ENCODE measurements at regions of chr10 and their contacts with region 1.

Region 1: DNA sequence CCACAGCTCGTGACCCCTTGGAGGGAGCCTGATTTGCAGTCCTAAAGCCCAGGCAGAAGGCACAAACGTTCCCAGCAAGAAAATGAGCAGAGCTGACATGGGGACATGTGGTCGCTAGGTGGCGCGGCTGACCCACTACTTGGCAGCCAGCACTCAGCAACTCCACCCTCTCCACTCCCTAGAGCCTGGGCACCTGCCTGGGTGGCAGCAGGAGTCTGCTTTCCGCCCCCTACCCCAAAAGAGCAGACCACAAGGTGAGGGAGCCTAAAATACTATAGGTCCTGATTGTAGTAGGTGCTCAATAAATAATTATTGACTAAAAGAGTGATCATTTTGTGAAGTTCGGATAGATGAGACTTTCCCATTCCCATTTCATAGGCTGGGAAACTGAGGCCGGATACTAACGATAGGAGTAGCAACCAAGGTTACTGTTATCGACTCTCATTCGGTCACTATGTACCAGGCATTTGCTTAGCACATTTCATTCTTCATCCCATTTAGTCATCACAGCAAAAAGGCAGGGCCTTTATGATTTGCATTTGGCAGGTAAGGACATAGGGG is 57.4 kb downstream of the NEUROG3 start:
- DNase-seq: peak; percentile 85
- ATAC-seq: peak; percentile 94
- H3K4me3 Mint-ChIP-seq: no peak overlapping the region
- H3K27ac Mint-ChIP-seq: no peak overlapping the region
- H3K4me1 Mint-ChIP-seq: no peaks in the 10 kb centered on the region
- H3K27me3 Mint-ChIP-seq: peaks cover 34% of the 10 kb centered on the region

Region 2: GRCh38 chr10:69498711-69499476 is 16.9 kb before region 1 on chr10:
- CTCF ChIA-PET with region 1: interaction called, 14 read pairs
- POLR2A ChIA-PET with region 1: interaction called, 3 read pairs
- DNase-seq: no peak
- ATAC-seq: no peak
- H3K4me3 Mint-ChIP-seq: no peak overlapping the region
- H3K27ac Mint-ChIP-seq: no peak overlapping the region
- H3K4me1 Mint-ChIP-seq: peaks cover 8% of the 10 kb centered on the region
- H3K27me3 Mint-ChIP-seq: no peaks in the 10 kb centered on the region

Region 3: GRCh38 chr10:69629897-69630650 is 114.3 kb after region 1 on chr10 and contains the start of gene FAM241B:
- CTCF ChIA-PET with region 1: interaction called, 314 read pairs
- POLR2A ChIA-PET with region 1: interaction called, 5 read pairs
- DNase-seq: peak; percentile 83
- ATAC-seq: peak; percentile 92
- H3K4me3 Mint-ChIP-seq: peak within 1 kb of the TSS; percentile 62
- H3K27ac Mint-ChIP-seq: peak within 1 kb of the TSS; percentile 58
- H3K4me1 Mint-ChIP-seq: peaks cover 11% of the 10 kb centered on the region
- H3K27me3 Mint-ChIP-seq: peaks cover 2% of the 10 kb centered on the region
- total RNA-seq, gene FAM241B: 5.4 to 6.1 TPM

Region 4: DNA sequence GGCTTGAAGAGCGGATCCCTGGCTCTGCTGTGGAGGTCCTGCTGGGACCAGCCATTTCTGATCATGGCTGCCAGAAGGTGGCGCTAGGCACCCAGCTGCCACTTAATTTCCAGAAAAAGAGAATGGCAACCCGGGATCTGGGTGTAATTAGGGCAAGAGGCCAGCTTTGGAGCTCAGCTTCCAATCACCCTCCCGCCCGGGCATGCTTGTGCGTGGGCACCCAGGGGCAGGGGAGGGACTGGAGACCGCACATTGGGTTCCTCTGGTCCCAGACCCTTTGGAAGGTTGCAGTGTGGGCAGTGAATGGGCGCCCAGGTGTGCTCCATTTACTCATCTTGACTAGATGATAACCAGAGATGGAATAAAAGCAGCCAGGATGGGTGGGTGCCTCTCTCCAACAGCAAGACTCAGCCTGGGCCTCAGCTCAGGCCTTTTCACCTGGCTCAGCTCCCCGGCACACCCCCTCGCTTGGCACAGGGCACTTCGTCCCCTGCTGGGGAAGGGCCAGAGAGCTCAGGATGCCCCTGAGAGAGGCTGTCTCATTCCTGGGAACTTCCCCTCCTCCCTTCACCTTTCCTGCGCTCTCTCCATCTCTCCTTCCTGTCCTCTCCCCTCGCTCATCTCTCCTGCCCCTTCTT is 129.0 kb after region 1 on chr10:
- CTCF ChIA-PET with region 1: interaction called, 314 read pairs
- POLR2A ChIA-PET with region 1: no interaction called
- DNase-seq: peak; percentile 64
- ATAC-seq: peak; percentile 57
- H3K4me3 Mint-ChIP-seq: no peak overlapping the region
- H3K27ac Mint-ChIP-seq: no peak overlapping the region
- H3K4me1 Mint-ChIP-seq: peaks cover 2% of the 10 kb centered on the region
- H3K27me3 Mint-ChIP-seq: peaks cover 4% of the 10 kb centered on the region